Dendritic cell treated with granulocyte-macrophage colony-stimulating factor and Interleukin-4, amounts not matched to agents 40 ng/mL and 50 ng/mL, for 4 days (primary cell): ENCODE measurements at regions of chr18 and their contacts with region 1.

Region 1: DNA sequence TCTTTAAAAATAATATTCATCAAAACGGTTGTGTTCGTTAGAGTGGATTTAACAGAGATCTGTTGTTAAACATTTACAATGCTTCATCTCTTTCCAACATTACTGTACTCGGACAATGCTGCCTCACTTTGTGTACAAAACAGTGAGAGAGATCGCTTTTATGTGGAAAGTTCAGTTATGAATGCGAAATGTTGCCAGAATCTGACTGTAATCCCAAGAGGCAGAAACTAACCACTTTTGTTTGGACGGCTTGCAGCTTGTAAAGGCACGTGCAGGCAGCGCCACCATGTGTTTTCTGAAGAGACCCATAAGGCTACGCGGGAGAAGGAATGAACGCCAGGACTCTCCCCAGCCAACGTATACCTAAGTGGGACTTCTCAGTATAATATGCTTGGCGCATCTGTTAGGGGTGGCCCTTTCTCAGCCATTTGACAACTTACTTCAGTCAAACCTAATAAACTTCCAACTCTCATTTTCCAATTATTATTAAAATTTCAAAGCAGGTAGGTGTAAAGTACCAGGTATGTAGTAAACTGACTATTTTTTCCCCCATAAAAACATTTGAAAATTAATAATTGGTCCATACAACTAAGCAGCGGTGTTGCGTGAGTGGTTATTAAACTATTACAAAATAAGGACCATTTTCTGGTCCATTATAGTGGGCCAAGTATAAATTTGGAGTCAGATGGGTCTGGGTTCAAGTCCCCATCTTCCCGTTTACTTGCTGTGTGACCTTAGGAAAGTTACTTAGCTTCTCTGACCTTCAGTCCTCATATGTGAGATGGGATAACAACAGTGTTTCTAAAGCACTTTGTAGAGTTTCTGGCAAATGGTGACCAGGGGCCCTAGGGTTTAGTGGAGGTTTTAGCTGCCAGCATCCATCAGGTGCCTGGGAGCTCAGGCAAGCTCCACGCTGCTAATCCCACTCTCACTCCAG is 5.6 kb upstream of the NAPG start:
- H3K4me3 Mint-ChIP-seq: no peak overlapping the region
- H3K27ac Mint-ChIP-seq: no peak overlapping the region
- H3K4me1 Mint-ChIP-seq: peaks cover 37% of the 10 kb centered on the region
- H3K27me3 Mint-ChIP-seq: peaks cover 5% of the 10 kb centered on the region

Region 2: DNA sequence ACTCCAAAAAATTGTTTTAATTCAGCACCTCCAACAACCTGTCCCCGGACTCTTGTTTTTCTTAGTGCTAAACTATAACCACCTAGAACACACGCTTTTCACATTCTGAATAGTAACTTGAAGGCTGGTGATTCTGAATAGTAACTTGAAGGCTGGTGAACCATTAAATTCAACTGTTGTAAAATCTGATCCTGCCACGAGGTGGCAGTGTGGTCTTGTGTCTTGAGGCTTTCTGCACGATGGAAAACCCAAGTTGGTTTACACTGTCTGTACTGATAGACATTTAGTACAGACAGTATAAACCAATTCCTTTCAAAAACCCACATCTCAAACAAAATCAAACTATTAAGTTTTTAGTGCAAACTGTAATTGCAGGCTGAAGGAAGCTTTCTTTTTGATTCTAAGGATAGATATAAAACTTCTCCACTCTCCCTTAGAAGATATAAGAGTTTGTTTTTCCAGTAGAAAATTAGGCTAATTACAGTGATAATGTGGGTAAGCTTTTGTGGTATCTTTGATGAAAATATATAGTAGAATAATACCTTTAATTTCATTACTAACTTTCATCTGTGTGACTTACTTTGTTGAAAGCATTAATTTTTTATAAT is 548.9 kb before region 1 on chr18:
- intact Hi-C with region 1: loop called (anchors 1 kb)
- H3K4me3 Mint-ChIP-seq: no peak overlapping the region
- H3K27ac Mint-ChIP-seq: no peak overlapping the region
- H3K4me1 Mint-ChIP-seq: peaks cover 42% of the 10 kb centered on the region
- H3K27me3 Mint-ChIP-seq: peaks cover 33% of the 10 kb centered on the region

Region 3: DNA sequence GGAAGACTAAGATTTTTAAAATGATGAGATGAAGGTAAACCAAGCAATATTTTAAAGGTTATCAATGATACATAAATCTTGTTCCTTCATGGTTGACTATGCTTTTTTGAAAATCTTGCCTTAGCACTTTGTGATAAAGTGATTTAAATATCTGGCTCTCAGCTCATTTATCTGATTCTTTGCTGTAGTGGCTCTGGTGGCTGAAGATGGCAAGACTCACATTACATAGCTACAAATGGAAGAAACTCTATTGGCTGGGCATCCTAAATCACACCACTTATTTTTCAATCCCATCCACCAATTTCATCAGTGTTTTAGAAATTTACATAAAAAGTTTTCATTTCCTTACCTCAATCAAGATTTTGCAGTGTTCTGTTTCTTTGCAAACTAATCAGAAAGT is 82.4 kb before region 1 on chr18:
- intact Hi-C with region 1: no loop called
- H3K4me3 Mint-ChIP-seq: no peak overlapping the region
- H3K27ac Mint-ChIP-seq: no peak overlapping the region
- H3K4me1 Mint-ChIP-seq: no peaks in the 10 kb centered on the region
- H3K27me3 Mint-ChIP-seq: no peaks in the 10 kb centered on the region

Region 4: DNA sequence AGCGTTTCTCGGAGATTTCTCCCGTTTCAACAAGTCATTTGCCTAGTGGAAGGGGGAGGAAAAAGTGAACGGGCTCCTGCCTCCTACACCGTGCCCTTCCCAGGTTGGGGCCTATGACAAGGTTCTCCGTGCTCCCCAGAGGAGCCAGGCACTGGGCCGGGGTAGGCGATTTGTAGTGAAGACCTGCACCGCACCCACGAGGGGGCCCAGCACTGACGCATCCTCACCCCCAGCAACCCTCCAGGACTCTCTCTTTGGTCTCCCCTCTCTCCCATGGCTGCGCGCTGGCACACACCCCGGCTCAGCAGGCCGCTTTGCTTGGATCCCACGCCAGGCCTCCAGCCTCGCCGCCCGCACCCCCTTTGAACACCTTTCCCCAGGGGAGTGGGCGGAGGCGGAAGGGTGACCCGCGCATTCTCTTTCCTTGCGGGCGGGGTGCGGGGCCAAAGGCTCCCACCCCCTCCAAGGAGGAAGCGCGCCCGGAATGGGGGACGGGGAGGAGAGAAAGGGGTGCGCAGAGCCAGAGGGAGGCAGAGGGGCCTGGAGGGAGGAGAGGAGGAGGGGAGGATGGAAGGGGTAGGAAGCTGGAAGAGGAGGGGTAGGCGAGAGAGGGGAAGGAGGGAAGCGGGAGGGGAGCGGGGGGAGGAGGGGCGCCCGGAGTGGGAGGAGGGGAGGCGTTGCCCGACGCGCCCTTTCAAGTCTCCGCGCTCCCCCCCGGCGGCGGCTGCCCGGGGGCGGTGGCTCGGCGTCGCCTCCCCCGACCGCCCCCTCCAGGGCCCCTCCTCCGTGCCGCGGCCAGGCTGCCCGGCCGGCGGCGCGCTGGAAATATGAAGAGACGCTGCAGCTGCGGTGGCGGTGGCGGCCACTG is 66.2 kb before region 1 on chr18 and contains the start of gene APCDD1:
- intact Hi-C with region 1: loop called (anchors 10 kb)
- H3K4me3 Mint-ChIP-seq: peak within 1 kb of the TSS; percentile 71
- H3K27ac Mint-ChIP-seq: no peak within 1 kb of the TSS
- H3K4me1 Mint-ChIP-seq: peaks cover 14% of the 10 kb centered on the region
- H3K27me3 Mint-ChIP-seq: peaks cover 66% of the 10 kb centered on the region